ENCODE measurements at regions of chr16 and their contacts with region 1.

Region 1: DNA sequence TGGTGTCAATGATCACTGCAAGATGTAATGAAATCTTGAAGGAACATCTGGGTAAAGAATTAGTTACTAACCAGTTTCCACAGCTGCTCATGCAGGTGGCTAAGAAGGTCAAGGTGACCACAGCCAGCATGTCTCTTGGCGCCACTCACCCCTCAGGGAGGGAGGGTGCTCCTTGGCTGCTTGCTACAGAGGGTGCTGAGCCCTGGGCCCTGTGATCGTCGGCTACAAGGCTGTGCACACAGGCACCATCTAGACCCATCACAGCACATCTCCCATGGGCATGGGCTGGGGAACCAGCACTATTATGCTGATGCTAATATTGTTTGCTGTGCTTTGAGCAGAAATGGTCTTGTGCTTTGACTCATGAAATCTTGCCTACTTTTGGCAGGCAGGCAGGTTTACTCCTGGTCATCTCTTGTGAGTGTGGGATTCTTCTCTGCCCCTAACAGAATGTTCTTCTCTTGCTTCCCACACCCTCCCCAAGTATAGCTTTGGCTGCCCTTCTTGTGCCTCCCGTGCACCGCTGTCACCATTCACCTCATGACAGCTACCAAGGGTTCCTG is 36.4 kb downstream of the TXNDC11 start:
- DNase-seq: no peak
- ATAC-seq: no peak
- H3K4me3 ChIP-seq: no peak overlapping the region
- H3K27ac ChIP-seq: no peak overlapping the region
- H3K4me1 ChIP-seq: peaks cover 0 to 12% of the 10 kb centered on the region in 2 donors
- H3K27me3 ChIP-seq: no peaks in the 10 kb centered on the region
- CTCF ChIP-seq: no peak

Region 2: DNA sequence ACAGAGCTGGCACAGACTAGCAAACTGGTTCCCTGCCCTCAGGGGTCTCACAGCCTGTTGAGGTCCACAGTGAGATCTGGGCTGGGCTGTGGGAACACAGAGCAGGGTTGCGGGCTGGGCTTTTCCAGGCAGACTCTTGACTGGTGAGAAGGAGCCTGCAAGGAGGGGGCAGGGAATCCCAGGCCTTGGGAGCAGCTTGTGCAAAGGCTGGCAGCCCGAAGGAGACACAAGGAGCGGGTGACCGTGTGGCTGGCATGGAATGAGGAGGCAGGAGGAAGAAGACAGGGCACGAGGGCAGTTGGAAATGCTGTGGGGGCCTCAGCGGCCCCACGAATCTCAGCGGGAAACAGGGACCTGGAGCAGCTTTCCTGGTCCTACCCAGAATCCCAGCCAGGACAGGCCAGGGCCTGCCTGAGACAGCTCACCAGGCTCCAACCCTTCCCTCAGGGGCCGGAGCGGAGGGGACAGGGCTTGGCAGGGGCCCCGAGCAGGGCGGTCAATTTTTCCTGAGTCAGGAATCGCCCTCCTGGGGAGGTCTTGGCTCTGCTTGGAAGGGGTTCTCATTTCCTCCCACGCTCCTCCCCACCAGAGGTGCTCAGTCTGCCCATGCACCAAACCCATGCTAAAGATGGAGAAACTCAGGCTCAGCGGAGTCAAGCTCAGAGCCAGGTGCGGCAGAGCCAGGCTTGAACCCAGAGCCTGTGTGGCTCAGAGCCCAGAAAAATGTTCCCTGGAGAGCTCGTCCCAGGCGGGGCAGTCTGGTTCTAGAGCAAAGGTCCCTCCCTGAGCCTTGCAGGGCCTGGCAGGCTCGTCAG is 47.2 kb before region 1 on chr16:
- intact Hi-C with region 1: loop called in 1 of 2 experiments (anchors 5 kb)
- DNase-seq: peak in 1 of 4 donors; percentile 66
- ATAC-seq: peak; percentile 77
- H3K4me3 ChIP-seq: no peak overlapping the region
- H3K27ac ChIP-seq: no peak overlapping the region
- H3K4me1 ChIP-seq: peaks cover 0 to 3% of the 10 kb centered on the region in 2 donors
- H3K27me3 ChIP-seq: no peaks in the 10 kb centered on the region
- CTCF ChIP-seq: no peak

Region 3: DNA sequence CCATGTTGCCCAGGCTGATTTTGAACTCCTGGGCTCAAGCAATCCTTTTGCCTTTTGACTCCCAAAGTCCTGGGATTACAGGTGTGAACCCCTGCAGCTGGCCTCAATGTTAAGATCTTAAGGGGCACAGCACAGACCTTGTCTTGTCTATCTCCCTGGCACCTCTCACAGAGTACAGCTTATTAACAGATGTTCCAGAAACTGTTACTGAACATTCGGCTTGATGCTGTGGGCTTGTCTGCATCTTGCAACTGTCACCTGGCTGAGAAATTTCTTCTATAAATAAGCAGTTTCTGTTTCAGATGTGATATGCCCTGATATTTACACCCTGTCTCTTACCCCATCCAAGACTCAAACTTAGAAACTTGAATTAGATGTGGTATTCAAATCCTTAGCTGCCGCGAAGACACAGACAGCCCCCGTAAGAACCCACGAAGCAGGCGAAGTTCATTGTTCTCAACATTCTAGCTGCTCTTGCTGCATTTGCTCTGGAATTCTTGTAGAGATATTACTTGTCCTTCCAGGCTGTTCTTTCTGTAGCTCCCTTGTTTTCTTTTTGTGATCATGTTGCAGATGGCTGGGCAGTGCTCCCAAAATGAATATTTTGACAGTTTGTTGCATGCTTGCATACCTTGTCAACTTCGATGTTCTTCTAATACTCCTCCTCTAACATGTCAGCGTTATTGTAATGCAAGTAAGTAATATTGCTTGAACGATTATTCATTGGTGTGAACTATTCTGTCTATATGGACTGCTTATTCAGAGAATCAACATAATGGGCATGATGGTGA is 258.7 kb after region 1 on chr16 and contains the start of gene TNFRSF17:
- intact Hi-C with region 1: no loop called
- DNase-seq: no peak
- ATAC-seq: no peak
- H3K4me3 ChIP-seq: no peak within 1 kb of the TSS
- H3K27ac ChIP-seq: no peak within 1 kb of the TSS
- H3K4me1 ChIP-seq: no peaks in the 10 kb centered on the region
- H3K27me3 ChIP-seq: no peaks in the 10 kb centered on the region
- CTCF ChIP-seq: no peak
- polyA plus RNA-seq, gene TNFRSF17: 0.24 to 0.54 TPM in 2 of 6 donors, not detected in the others

Measured in left lung (tissue), 14 donors.